ENCODE measurements at regions of chr4 and their contacts with region 1.

Region 1: DNA sequence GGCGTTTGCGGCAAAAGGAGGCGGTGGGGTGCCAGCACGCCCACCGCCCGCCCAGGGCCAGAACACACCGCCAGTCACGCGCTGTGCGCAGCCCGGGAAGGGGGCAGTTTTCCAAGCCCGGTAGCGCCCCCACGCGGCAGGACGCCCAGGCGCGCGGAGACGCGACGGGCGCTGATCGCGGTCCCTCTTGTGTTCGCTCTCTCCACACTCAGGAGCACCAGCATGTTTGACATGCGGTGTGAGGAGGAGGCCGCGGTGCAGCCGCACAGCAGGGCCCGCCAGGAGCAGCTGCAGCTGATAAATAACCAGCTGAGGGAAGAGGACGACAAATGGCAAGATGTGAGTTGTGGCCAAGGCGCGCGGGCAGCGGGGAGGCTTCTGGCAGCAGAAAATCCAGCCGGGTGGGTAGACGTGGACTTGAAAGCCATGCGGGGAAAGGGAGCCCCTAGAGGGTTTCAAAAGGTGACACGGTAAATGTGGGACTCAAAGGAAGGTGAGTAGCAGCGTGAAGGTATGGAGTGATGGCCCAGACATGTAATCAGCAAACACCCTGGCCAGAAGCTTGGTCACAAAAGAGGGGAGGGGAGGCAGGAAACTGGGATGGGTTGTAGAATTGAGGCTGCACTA is 104.1 kb downstream of the PHOX2B start:
- DNase-seq: no peak
- H3K4me3 ChIP-seq: no peak overlapping the region
- H3K27me3 ChIP-seq: no peaks in the 10 kb centered on the region
- CTCF ChIP-seq: peak; percentile 84

Region 2: GRCh38 chr4:41360214-41360920 is 284.0 kb before region 1 on chr4:
- CTCF ChIA-PET with region 1: interaction called, 11 read pairs
- POLR2A ChIA-PET with region 1: no interaction called
- DNase-seq: no peak
- H3K4me3 ChIP-seq: peak overlapping the region; percentile 56
- H3K27me3 ChIP-seq: no peaks in the 10 kb centered on the region
- CTCF ChIP-seq: no peak

Region 3: DNA sequence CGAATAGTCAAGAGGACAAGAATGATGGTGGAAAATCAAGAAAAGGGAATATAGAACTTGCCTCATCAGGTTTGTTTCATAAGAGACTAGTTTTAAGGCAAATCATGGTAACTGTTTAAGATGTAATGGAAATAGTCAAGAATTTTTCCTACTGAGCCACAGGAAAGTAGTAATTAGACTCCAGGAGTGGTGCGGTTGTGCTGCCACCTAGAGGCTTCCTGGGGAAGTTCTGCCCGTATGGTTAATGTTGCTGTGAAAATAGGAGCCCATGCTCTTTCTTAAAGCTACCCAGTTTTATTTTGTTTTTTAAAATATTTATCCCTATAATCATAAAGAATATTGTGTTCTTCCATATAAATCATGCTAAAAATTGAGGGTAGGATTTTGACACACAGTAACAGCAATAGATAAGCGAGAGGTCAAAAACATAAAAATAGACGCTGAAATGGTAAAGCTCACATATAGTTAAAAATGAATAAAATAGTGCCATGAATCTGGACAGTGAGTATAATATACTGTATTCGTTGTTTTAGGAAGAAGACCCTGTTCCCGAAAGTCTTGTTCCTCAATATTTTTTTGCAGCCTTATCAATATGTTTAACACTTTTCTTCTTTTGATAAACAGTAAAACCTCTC is 17.2 kb after region 1 on chr4:
- CTCF ChIA-PET with region 1: interaction called, 15 read pairs
- POLR2A ChIA-PET with region 1: no interaction called
- DNase-seq: no peak
- H3K4me3 ChIP-seq: no peak overlapping the region
- H3K27me3 ChIP-seq: no peaks in the 10 kb centered on the region
- CTCF ChIP-seq: peak; percentile 89

Measured in BJ (cell line).